ENCODE measurements at regions of chr1 and their contacts with region 1.

Region 1: DNA sequence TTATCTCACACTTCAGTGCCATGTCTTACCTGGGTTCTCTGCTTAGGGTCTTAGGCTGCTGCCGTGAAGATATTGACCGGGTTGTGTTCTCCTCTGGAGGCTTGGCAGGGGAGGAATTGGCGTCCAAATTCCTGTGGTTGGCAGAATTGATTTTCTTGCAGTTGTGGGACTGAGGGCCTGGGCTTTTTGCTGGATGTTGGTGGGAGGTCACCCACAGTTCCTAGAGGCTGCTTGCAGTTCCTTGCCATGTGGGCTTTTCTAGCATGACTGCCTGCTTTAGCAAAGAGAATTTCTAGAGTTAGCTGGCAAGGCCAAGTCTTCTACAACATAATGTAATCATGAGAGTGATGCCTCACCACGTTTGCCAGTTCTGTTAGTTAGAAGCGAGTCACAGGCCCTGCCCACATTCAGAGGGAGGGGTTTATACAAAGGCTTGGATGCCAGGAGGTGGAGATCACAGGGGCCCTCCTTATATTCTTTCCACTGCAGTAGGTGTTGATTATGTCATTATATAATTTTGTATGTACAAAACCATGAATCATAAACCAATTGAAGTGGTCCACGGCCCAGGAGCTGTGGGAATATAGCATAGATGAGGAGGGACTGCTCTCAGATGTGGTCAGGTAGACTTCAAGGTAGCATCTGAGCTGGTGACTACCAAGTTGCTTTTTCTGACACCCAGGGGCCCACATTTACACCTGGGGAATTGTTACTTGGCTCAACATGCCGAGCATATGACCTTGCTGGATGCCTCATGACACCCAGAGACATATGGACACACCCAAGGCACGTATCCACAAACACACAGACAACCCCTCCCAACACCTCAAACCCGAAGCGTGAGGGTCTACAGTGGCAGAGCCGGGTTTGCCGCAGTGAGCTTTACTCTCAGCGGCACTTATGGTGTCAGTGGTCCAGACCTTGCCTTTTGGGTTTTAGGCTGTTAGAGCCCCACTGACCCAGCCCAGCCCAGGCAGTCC is 6.7 kb downstream of the UBL4B start:
- DNase-seq: no peak
- ATAC-seq: no peak
- H3K4me3 ChIP-seq: no peak overlapping the region
- H3K27ac ChIP-seq: no peak overlapping the region
- H3K4me1 ChIP-seq: no peaks in the 10 kb centered on the region
- H3K27me3 ChIP-seq: peaks cover 10 to 35% of the 10 kb centered on the region in 2 experiments; a peak in 4 of 5 replicates
- CTCF ChIP-seq: no peak
- EP300 ChIP-seq: no peak
- POLR2A ChIP-seq: no peak
- RAD21 ChIP-seq: no peak

Region 2: DNA sequence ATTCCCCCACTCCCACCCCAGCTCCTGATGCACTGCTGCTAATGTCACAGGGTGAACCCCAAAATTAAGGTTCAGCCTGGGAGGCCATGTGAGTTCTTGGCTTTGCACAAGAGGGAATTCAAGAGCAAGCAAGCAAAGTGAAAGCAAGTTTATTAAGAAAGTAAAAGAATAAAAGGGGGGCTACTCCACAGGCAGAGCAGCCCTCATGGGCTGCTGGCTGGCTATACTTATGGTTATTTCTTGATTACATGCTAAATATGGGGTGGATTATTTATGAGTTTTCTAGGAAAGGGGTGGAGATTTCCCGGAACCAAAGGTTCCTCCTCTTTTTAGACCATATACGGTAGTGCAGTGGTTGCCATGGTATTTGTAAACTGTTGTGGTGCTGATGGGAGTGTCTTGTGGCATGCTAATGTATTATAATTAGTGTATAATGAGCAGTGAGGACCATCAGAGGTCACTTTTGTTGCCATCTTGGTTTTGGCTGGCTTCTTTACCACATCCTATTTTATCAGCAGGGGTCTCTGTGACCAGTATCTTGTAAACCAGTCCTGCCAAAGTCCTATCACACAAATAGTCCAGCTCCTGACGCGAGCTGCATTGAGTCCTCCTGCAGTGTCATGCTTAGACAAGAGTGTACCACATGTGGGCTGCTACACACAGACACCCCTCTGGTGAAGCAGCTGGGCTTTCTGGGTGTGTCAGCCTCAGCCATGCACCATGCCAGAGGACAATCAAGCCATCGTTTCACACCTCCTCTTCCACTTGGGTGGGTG is 254.7 kb before region 1 on chr1:
- CTCF ChIA-PET with region 1: no interaction called
- POLR2A ChIA-PET with region 1: no interaction called
- in situ Hi-C with region 1: no loop called
- intact Hi-C with region 1: no loop called
- DNase-seq: peak; percentile 42 to 82 (median 52)
- ATAC-seq: peak; percentile 97
- H3K4me3 ChIP-seq: no peak overlapping the region
- H3K27ac ChIP-seq: peak overlapping the region; percentile 42; the same call in 2 of the 3 replicates
- H3K4me1 ChIP-seq: peaks cover 6 to 13% of the 10 kb centered on the region in 2 experiments; a peak in 3 of 5 replicates
- H3K27me3 ChIP-seq: no peaks in the 10 kb centered on the region
- CTCF ChIP-seq: peak in 1 of 3 experiments; percentile 18; a peak in 1 of 6 replicates
- EP300 ChIP-seq: 0 out of 2 replicates have a peak, but pooled peaks have one; percentile 15
- POLR2A ChIP-seq: no peak
- RAD21 ChIP-seq: peak in 1 of 2 experiments; percentile 7; a peak in 1 of 4 replicates

Region 3: DNA sequence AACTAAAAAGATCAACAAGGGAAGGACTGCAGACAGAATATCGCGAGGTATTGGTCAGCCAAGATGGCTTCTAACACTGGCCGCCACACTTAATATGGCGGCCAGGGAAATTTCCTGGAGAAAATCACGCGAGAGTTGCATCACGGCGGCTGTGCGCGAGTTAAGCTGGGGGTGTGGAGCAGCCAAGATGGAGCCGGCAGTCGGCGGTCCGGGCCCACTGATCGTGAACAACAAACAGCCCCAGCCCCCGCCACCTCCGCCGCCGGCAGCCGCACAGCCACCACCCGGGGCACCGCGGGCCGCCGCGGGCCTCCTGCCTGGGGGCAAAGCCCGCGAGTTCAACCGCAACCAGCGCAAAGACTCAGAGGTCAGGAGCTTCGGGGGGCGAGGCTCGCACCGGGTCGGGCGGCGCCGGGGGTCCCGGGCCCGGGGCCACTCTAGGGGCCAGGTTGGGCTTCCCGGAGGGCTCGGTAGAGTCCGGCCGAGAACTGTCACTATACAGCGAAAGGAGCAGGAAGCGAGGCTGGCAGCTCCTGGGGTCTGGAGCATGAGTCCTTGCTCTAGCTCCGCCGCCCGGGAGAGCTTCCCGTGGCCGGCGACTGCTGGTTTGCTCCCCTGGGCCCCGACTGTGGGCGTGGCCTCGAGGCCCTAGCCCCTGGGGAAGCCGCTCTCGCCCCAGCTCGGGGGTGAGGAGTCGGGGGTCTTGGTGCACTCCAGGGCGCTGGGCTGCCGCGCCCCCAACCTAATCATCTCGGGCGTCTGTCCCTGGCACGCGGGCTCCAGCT is 84.3 kb before region 1 on chr1 and contains the start of gene STRIP1:
- CTCF ChIA-PET with region 1: no interaction called
- POLR2A ChIA-PET with region 1: no interaction called
- in situ Hi-C with region 1: no loop called
- intact Hi-C with region 1: loop called (anchors 1 kb)
- DNase-seq: peak; percentile 94 to 98 (median 94)
- ATAC-seq: peak; percentile 91
- H3K4me3 ChIP-seq: peak within 1 kb of the TSS; percentile 95
- H3K27ac ChIP-seq: peak within 1 kb of the TSS; percentile 88
- H3K4me1 ChIP-seq: peaks cover 16 to 40% of the 10 kb centered on the region in 2 experiments
- H3K27me3 ChIP-seq: no peaks in the 10 kb centered on the region
- CTCF ChIP-seq: peak in 1 of 3 experiments; percentile 60; a peak in 2 of 6 replicates
- EP300 ChIP-seq: no peak; the same call in none of the 2 replicates
- POLR2A ChIP-seq: peak; percentile 90
- RAD21 ChIP-seq: no peak
- polyA plus RNA-seq, gene STRIP1: 9.9 to 10.5 TPM

Region 4: GRCh38 chr1:110053557-110054428 is 65.1 kb before region 1 on chr1:
- CTCF ChIA-PET with region 1: interaction called, 12 read pairs
- POLR2A ChIA-PET with region 1: no interaction called
- in situ Hi-C with region 1: no loop called
- intact Hi-C with region 1: loop called (anchors 2 kb)
- DNase-seq: peak; percentile 79 to 87 (median 84)
- ATAC-seq: peak; percentile 87
- H3K4me3 ChIP-seq: no peak overlapping the region
- H3K27ac ChIP-seq: no peak overlapping the region
- H3K4me1 ChIP-seq: peaks cover 13 to 16% of the 10 kb centered on the region in 2 experiments
- H3K27me3 ChIP-seq: no peaks in the 10 kb centered on the region
- CTCF ChIP-seq: peak; percentile 93 to 99 (median 97)
- EP300 ChIP-seq: no peak
- POLR2A ChIP-seq: no peak
- RAD21 ChIP-seq: peak; percentile 87 to 92

Region 5: DNA sequence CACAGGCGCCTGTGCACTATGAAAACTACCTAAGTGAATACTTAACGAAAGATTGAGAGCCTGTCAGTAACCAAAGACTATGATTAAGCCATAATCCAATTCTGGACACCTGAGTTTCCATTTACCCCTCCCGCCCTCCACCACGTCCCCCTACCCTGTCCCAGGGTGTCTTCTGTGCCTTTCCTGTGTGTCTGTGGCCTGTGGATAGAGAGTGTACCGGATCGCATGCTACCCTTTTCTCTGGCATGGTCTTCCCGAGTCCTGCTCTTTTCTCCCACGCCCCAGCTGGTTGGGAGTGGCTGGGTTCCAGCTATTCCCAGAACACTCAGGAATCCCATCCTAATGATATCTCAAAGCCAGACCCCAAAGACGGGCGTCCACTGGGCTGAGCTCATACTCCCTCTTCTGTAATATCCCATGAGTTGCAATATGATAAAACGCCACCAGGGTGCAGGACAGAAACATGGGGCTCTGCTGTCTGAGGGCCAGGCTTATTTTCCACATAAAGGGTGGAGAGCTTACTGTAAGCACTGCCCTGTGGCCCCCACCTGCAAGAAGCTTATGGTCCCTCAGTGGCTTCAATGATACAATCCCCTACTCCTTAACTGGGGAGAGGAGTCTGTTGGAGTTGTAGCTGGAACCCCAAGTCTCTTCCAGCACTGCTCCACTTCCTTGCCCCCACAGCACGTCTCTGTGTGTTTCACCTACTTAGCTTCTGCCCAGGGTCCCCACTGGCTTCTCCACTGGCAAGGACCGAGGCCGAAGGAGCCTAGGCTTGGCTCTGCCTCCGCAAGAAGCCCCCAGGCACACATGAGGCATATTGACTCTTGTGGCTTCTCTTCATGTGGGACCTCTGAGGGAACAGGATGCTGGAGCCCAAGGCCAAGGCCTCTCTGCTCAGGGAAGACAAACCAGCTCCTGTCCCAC is 30.9 kb before region 1 on chr1:
- CTCF ChIA-PET with region 1: no interaction called
- POLR2A ChIA-PET with region 1: interaction called, 3 read pairs
- in situ Hi-C with region 1: no loop called
- intact Hi-C with region 1: loop called (anchors 2 kb)
- DNase-seq: peak; percentile 80 to 87 (median 85)
- ATAC-seq: peak; percentile 97
- H3K4me3 ChIP-seq: no peak overlapping the region
- H3K27ac ChIP-seq: no peak overlapping the region
- H3K4me1 ChIP-seq: peaks cover 13 to 24% of the 10 kb centered on the region in 2 experiments
- H3K27me3 ChIP-seq: peaks cover 29 to 50% of the 10 kb centered on the region in 2 experiments
- CTCF ChIP-seq: peak; percentile 82 to 87 (median 84)
- EP300 ChIP-seq: no peak
- POLR2A ChIP-seq: no peak
- RAD21 ChIP-seq: peak; percentile 59 to 79

Measured in K562 (cell line).